MCF 10A (cell line): ENCODE measurements at regions of chr14 and their contacts with region 1.

Region 1: DNA sequence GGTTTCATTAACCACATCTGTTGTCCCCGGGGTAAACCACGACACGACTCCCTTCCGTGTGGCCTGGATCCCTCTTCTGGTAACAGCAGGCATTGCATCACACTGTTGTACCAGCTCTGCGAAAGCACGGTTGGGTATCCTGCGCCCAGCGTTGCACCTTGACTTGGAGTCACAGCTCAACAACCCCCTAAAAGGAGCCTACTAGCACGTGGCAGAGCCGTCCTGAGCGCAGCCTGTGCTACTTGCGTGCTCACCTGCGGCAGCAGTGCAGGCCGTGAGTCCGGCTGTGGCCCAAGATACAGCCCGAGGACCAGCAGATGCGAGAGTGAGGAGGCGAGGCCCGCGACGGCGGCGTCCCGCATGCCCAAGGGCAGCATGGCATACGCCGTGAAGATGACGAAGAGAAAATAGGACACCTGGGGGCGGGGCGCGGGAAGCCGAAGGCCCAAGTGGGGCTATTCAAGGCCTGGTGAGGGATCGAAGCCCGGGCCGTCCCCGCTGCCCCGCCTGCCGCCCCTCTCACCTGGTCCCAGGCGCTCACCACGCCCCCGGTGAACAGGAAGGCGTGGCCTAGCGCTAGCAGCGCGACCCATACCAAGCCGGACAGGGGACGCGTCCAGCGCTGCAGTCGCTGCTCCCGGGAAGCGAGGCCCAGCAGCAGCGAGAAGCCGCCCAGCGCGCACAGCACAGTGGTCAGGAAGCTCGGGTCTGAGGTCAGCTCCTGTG is 2.4 kb downstream of the ADCY4 start:
- DNase-seq: peak; percentile 72
- H3K4me3 Mint-ChIP-seq: no peak overlapping the region
- H3K27ac Mint-ChIP-seq: no peak overlapping the region
- H3K4me1 Mint-ChIP-seq: peaks cover 7% of the 10 kb centered on the region
- H3K27me3 Mint-ChIP-seq: peaks cover 11% of the 10 kb centered on the region
- CTCF ChIP-seq: peak; percentile 60

Region 2: DNA sequence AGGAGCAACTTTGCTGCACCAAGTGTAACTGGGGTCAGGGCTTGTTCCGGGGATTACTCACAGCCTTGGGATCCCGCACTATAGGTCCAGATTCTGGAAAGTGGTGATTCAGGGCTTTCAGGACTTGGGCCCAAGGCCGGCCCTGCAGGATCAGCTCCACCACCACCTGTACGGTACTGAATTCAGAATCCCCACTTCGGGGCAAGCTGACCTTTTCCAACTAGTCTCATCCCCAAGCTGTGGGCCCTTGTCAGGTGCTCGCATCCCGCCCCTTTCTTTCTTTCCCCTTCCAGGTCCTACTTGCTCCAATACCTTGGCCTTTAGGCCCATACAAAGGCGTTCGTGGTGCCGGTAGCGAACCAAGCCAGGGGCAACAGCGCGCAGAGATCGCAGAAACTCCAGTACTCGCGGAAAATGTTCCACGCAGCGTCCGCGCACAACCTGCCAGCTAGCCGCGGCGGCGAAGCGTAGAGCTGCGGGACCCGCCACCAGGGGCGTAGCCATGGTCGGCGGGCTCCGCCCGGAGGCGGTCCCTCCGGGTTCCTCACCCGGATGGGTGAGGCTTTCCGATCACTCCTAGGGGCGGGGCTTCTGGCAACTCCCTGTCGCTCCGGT is 90.5 kb before region 1 on chr14:
- CTCF ChIA-PET with region 1: interaction called, 26 read pairs
- POLR2A ChIA-PET with region 1: interaction called, 3 read pairs
- intact Hi-C with region 1: loop called (anchors 1 kb)
- DNase-seq: peak; percentile 94
- H3K4me3 Mint-ChIP-seq: peak overlapping the region; percentile 86
- H3K27ac Mint-ChIP-seq: peak overlapping the region; percentile 100
- H3K4me1 Mint-ChIP-seq: peaks cover 30% of the 10 kb centered on the region
- H3K27me3 Mint-ChIP-seq: no peaks in the 10 kb centered on the region
- CTCF ChIP-seq: peak; percentile 37

Region 3: DNA sequence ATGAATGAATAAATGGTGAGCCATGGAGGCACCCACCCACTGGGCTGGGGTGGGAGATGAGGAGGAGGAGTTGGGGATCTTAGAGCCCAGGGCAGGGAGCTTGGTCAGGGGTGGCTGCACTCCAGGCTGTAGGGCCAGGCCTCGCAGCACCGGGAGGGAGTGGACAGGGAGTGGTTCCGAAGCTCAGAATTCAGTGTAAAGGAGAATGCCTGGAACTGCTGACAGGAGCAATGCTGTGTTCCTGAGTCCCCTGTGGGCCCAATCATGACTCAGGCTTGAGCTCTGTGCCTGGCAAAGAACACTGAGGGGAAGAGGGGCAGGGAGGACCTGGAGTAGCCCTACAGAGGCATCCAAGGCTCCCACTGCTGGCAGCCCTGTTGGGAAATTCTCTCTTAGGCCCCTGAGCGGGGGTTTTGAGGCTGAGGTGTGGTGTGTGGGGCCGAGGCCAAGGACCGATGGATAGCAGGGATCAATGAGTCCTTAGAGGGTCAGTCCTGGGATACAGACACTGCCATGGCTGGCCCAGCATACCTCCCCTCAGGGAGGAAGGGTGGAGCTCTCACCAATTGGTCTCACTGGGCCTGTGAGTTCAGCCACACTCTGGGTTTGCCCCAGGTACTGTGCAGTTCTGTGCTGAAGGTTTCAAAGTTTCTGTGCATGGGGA is 51.5 kb before region 1 on chr14:
- CTCF ChIA-PET with region 1: no interaction called
- POLR2A ChIA-PET with region 1: no interaction called
- intact Hi-C with region 1: no loop called
- DNase-seq: no peak
- H3K4me3 Mint-ChIP-seq: no peak overlapping the region
- H3K27ac Mint-ChIP-seq: peak overlapping the region; percentile 53
- H3K4me1 Mint-ChIP-seq: peaks cover 31% of the 10 kb centered on the region
- H3K27me3 Mint-ChIP-seq: no peaks in the 10 kb centered on the region
- CTCF ChIP-seq: no peak

Region 4: GRCh38 chr14:24317141-24317928 is 15.1 kb before region 1 on chr14:
- CTCF ChIA-PET with region 1: interaction called, 53 read pairs
- POLR2A ChIA-PET with region 1: interaction called, 3 read pairs
- intact Hi-C with region 1: no loop called
- DNase-seq: peak; percentile 77
- H3K4me3 Mint-ChIP-seq: peak overlapping the region; percentile 8
- H3K27ac Mint-ChIP-seq: peak overlapping the region; percentile 79
- H3K4me1 Mint-ChIP-seq: peaks cover 20% of the 10 kb centered on the region
- H3K27me3 Mint-ChIP-seq: peaks cover 23% of the 10 kb centered on the region
- CTCF ChIP-seq: no peak

Region 5: DNA sequence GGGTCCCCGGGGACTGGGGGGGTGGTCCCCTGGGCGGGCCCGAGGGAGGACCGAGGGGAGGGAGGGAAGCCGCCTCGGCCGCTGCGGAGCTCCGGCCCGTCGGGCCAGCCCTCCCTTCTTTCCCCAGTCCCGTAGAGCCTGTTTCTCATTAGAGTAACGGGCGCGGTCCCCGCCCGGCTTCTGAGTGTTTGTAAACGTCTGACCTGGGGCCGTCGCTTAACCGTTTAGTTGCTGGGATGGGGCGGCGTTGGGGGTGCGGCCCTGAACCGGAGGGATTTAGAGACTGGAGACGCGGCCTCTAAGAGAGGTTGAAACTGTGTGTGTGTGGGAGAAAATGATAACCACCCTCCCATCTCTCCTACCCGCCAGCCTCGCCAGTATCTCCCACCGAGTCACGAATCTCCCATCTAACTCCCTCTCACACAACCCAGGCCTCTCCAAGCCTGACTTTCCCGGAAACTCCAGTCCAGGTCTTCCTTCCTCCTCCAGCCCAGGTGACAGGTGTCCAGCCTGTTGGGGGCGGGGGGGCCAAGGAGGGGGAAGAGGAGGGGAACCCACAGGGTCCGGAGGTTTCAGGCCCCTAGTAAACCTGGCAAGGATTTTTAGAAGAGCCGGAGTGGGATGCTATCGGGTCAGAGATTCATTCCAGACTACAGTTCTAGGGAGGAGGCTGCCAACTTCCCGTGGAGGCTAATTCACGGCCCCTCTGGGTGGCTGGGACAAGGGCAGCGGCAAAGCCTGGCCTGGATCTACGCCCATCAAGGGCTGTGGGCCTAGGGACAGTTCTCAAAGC is 34.5 kb after region 1 on chr14:
- CTCF ChIA-PET with region 1: interaction called, 21 read pairs
- POLR2A ChIA-PET with region 1: no interaction called
- intact Hi-C with region 1: no loop called
- DNase-seq: peak; percentile 97
- H3K4me3 Mint-ChIP-seq: peak overlapping the region; percentile 75
- H3K27ac Mint-ChIP-seq: peak overlapping the region; percentile 96
- H3K4me1 Mint-ChIP-seq: peaks cover 24% of the 10 kb centered on the region
- H3K27me3 Mint-ChIP-seq: no peaks in the 10 kb centered on the region
- CTCF ChIP-seq: no peak

Region 6: DNA sequence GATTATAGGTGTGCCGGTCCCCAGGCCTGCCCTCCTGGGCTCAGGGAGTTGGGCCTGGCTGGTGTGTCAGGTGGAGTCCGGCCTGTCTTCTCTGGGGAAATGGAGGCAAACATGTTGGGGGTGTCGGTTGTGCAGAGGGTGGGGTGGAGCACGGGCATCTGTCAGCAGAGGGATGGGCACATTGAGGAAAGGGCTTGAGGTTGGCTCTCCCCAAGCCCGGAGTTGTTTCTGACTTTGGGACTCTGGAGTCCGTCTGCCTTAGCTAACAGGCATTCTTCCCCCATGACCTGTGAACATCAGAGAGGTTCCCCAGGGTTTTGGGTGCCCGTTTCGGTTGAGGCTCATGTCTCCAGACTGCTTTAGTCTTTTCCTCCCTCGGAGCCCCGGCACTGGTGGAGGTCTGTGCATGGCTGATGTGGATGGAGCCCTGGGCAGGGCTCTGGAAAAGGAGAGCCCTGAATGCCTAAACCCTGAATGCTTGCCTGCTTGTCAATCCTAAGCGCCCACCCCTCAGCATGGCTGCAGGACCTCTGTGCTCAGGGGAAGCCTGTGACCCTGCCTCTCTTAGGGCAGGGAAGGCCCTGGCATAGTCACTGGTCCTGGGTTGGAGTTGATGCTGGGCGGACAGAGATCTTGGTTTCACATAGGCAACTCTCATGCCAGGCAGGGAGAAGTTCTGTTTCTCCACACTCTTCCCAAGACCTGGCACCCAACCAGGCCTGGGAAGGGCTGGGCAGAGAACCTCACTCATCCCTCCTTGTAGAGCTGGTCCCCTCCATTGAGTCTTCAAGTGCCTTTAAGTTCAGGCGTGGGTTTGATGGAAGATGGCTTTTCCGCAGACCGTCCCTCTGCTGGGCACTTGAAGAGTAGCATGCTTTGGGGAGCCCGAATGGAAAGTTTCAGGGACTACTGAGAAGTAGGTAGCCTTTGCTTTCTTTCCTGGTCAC is 79.3 kb after region 1 on chr14:
- CTCF ChIA-PET with region 1: interaction called, 109 read pairs
- POLR2A ChIA-PET with region 1: interaction called, 4 read pairs
- intact Hi-C with region 1: loop called (anchors 1 kb)
- DNase-seq: peak; percentile 61
- H3K4me3 Mint-ChIP-seq: no peak overlapping the region
- H3K27ac Mint-ChIP-seq: no peak overlapping the region
- H3K4me1 Mint-ChIP-seq: no peaks in the 10 kb centered on the region
- H3K27me3 Mint-ChIP-seq: no peaks in the 10 kb centered on the region
- CTCF ChIP-seq: peak; percentile 58

Region 7: GRCh38 chr14:24442273-24443052 is 110.0 kb after region 1 on chr14 and contains the start of gene SDR39U1:
- CTCF ChIA-PET with region 1: interaction called, 626 read pairs
- POLR2A ChIA-PET with region 1: interaction called, 18 read pairs
- intact Hi-C with region 1: no loop called
- DNase-seq: peak; percentile 99
- H3K4me3 Mint-ChIP-seq: peak within 1 kb of the TSS; percentile 78
- H3K27ac Mint-ChIP-seq: peak within 1 kb of the TSS; percentile 100
- H3K4me1 Mint-ChIP-seq: peaks cover 8% of the 10 kb centered on the region
- H3K27me3 Mint-ChIP-seq: no peaks in the 10 kb centered on the region
- CTCF ChIP-seq: no peak
- total RNA-seq, gene SDR39U1: 53.2 and 58.7 TPM in 2 replicates